Activated CD4-positive, alpha-beta T cell treated with anti-CD3 and anti-CD28 coated beads for 36 hours (primary cell): ENCODE measurements at regions of chr9 and their contacts with region 1.

Region 1: GRCh38 chr9:89602978-89603766 is 1.6 kb upstream of the GADD45G start:
- DNase-seq: peak; percentile 95
- ATAC-seq: peak; percentile 23
- H3K4me3 Mint-ChIP-seq: peak overlapping the region; percentile 66
- H3K27ac Mint-ChIP-seq: no peak overlapping the region
- H3K4me1 Mint-ChIP-seq: peaks cover 33% of the 10 kb centered on the region
- H3K27me3 Mint-ChIP-seq: no peaks in the 10 kb centered on the region

Region 2: GRCh38 chr9:89278997-89279739 is 324.0 kb before region 1 on chr9:
- CTCF ChIA-PET with region 1: no interaction called
- POLR2A ChIA-PET with region 1: no interaction called
- intact Hi-C with region 1: no loop called
- DNase-seq: peak; percentile 22
- ATAC-seq: peak; percentile 28
- H3K4me3 Mint-ChIP-seq: no peak overlapping the region
- H3K27ac Mint-ChIP-seq: no peak overlapping the region
- H3K4me1 Mint-ChIP-seq: peaks cover 35% of the 10 kb centered on the region
- H3K27me3 Mint-ChIP-seq: no peaks in the 10 kb centered on the region

Region 3: DNA sequence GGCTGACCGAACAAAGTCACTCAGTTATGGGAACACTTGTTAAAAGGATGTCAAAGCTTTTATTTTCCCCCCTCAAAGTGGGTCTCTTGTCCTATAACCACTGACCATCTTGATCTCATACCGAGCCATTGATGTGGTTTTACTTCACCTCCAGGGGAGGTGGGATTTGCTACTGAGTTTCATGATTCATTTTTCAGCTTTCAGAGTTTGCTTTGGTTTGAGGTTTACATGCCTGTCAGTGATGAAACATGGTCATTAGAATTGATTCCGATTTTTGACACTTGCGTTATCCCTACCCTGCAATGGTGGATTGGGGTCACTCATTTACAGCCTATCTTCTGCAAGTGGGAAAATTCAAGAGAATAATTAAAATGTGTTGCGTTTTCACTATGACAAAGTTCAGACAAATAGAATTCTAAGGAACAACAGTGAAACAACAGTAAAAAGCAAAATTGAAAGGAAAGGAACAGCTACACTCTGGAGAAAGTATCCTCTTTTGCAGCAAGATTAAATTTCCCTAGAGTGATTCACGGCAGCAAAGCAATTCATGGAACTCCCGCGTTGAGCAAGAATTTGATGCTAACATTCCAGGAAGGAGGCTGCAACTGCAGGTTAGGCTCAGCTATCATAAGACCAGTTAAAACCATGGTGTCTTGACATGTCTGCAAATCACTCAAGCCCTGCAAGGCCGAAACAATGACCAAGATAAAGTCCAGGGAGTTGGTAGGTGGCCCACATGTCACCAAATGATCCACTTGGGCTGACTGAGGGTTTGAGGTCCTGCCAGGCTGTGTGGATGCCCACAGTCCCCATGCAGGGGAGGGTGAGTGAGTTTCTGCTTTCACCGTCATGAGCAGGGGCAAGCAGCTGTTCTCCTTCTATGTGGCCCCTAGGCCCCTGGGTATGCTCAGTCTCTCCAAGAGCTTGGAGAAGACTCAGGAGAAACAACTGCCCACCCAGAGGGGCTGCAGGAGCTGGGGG is 11.0 kb after region 1 on chr9:
- CTCF ChIA-PET with region 1: interaction called, 13 read pairs
- POLR2A ChIA-PET with region 1: no interaction called
- intact Hi-C with region 1: no loop called
- DNase-seq: no peak
- ATAC-seq: peak; percentile 73
- H3K4me3 Mint-ChIP-seq: no peak overlapping the region
- H3K27ac Mint-ChIP-seq: no peak overlapping the region
- H3K4me1 Mint-ChIP-seq: peaks cover 8% of the 10 kb centered on the region
- H3K27me3 Mint-ChIP-seq: peaks cover 2% of the 10 kb centered on the region

Region 4: GRCh38 chr9:89743573-89744361 is 140.6 kb after region 1 on chr9:
- CTCF ChIA-PET with region 1: interaction called, 5 read pairs
- POLR2A ChIA-PET with region 1: no interaction called
- intact Hi-C with region 1: loop called (anchors 2 to 10 kb)
- DNase-seq: peak; percentile 65
- ATAC-seq: peak; percentile 68
- H3K4me3 Mint-ChIP-seq: peak overlapping the region; percentile 3
- H3K27ac Mint-ChIP-seq: peak overlapping the region; percentile 16
- H3K4me1 Mint-ChIP-seq: peaks cover 77% of the 10 kb centered on the region
- H3K27me3 Mint-ChIP-seq: no peaks in the 10 kb centered on the region

Region 5: GRCh38 chr9:89999534-90000370 is 396.6 kb after region 1 on chr9:
- CTCF ChIA-PET with region 1: interaction called, 6 read pairs
- POLR2A ChIA-PET with region 1: no interaction called
- intact Hi-C with region 1: loop called in 1 of 2 experiments (anchors 1 kb)
- DNase-seq: peak; percentile 84
- ATAC-seq: peak; percentile 91
- H3K4me3 Mint-ChIP-seq: peak overlapping the region; percentile 42
- H3K27ac Mint-ChIP-seq: peak overlapping the region; percentile 86
- H3K4me1 Mint-ChIP-seq: peaks cover 25% of the 10 kb centered on the region
- H3K27me3 Mint-ChIP-seq: no peaks in the 10 kb centered on the region

Region 6: DNA sequence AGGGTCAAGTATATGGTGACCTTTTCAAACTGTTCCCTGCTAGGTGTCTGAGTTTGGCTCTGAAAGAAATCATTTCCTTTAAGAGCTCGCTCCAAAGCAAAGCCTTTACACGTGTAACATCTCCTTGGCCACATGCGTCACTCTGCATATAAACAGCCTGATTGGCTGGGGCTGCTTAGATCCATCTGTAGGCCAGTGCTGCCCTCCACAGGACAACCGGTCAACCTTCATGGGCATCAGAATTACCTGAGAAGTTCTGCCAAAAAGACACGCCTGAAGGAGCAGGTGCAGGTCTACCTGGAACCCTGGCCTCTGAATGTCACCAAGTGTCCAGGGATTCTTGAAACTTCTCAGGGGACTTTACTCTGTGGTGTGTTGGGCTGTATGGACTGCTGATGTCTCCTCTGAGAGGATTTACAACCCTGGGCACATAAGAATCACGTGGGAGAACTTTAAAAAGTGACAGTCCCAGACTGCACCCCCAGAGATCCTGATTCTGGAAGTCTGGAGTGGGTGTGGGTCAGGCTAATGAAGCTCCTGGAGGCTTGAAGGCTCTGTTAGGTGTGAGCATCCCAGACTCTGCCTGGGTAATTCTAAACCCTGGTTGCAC is 499.2 kb after region 1 on chr9:
- CTCF ChIA-PET with region 1: interaction called, 114 read pairs
- POLR2A ChIA-PET with region 1: no interaction called
- intact Hi-C with region 1: loop called (anchors 1 kb)
- DNase-seq: peak; percentile 90
- ATAC-seq: peak; percentile 100
- H3K4me3 Mint-ChIP-seq: no peak overlapping the region
- H3K27ac Mint-ChIP-seq: no peak overlapping the region
- H3K4me1 Mint-ChIP-seq: peaks cover 3% of the 10 kb centered on the region
- H3K27me3 Mint-ChIP-seq: peaks cover 2% of the 10 kb centered on the region